ENCODE measurements at regions of chr4 and their contacts with region 1.

Region 1: DNA sequence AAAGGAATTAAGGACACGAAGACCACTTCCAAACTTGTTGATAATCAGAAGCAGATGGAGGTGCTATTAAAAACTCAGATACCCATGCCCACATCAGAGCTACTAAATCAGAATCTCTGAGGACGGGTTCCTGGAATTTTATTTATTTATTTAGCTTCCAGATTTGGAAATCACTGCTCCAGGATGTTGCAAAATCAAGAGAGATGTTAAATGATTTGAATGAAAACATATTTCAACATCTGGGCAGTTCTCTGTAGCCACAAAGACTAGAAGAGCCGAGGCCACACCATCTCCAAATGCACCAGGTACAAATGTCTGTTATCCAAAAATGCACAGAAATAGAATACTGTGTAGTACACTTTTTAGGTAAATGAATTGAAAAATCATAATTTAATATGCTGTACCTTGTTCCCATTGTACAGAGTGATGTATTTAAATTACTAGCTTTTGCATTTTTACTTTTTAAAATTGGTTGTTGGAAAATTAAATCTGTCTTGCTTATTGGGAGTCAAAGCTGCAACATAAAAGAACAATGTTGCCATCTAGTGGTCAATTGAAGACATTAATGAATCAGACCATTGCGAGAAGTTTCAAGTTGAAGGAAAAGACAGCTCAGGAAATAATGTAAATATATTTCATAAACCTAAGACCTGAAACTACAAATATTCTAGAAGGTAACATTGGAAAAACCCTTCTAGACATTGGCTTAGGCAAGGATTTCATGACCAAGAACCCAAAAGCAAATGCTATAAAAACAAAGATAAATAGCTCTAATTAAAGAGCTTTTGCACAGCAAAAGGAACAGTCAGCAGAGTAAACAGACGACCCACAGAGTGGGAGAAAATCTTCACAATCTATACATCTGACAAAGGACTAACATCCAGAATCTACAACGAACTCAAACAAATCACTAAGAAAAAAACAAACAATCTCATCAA is 151.3 kb upstream of the TTC29 start:
- DNase-seq: peak in 2 of 9 experiments; percentile 54 to 66
- ATAC-seq: no peak
- H3K4me3 ChIP-seq: no peak overlapping the region
- H3K4me3 Mint-ChIP-seq: no peak overlapping the region
- H3K27ac ChIP-seq: no peak overlapping the region
- H3K27ac Mint-ChIP-seq: no peak overlapping the region
- H3K4me1 ChIP-seq: no peaks in the 10 kb centered on the region
- H3K4me1 Mint-ChIP-seq: no peaks in the 10 kb centered on the region
- H3K27me3 ChIP-seq: no peaks in the 10 kb centered on the region
- H3K27me3 Mint-ChIP-seq: peaks cover 27% of the 10 kb centered on the region
- CTCF ChIP-seq: peak; percentile 89

Region 2: GRCh38 chr4:145234091-145234706 is 1862.7 kb before region 1 on chr4:
- CTCF ChIA-PET with region 1: no interaction called
- POLR2A ChIA-PET with region 1: no interaction called
- intact Hi-C with region 1: loop called in 1 of 2 experiments (anchors 5 kb)
- DNase-seq: peak; percentile 4 to 75 (median 48)
- ATAC-seq: peak; percentile 83
- H3K4me3 ChIP-seq: no peak overlapping the region
- H3K4me3 Mint-ChIP-seq: no peak overlapping the region
- H3K27ac ChIP-seq: no peak overlapping the region
- H3K27ac Mint-ChIP-seq: no peak overlapping the region
- H3K4me1 ChIP-seq: no peaks in the 10 kb centered on the region
- H3K4me1 Mint-ChIP-seq: no peaks in the 10 kb centered on the region
- H3K27me3 ChIP-seq: no peaks in the 10 kb centered on the region
- H3K27me3 Mint-ChIP-seq: peaks cover 2% of the 10 kb centered on the region
- CTCF ChIP-seq: peak; percentile 66

Region 3: DNA sequence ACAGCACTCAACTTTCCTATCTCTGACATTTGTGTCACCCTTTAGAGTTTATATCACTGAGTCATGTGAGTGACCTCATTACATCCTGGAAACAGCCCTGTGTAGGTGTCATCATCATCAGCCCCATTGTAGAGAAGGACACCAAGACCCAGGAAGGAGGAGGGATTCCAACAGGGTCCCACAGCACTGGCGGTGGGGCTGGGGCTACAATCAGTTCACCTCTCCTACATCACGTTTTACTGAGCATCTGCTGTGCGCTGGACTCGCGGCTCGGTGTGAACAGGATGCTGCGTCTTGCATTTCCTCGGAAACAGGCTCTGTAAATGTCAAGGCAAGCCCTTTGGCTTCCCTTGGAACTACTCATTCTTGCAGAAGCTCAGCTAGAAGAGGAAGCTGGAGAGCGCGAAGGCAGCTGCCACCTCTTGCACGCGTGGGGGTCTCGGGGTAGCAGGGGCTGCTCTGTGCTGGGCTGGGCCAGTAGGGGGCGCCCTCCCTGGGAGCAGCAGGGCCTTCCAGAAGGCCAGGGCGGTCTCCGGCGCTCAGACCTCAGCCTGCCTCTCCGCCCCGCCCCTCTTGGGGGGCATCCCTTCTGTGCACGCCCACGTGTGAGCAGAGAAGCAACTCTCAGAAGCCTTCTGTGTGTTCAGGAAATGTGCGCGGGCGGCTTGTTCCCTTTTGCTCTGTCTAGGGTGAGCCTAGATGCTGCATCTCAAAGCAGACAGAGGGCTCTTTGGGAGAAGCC is 853.6 kb before region 1 on chr4:
- CTCF ChIA-PET with region 1: interaction called, 7 read pairs
- POLR2A ChIA-PET with region 1: no interaction called
- intact Hi-C with region 1: loop called in 1 of 2 experiments (anchors 1 kb)
- DNase-seq: peak in 8 of 9 experiments; percentile 24 to 66 (median 50)
- ATAC-seq: peak; percentile 74
- H3K4me3 ChIP-seq: peak overlapping the region in 1 of 2 experiments; percentile 28
- H3K4me3 Mint-ChIP-seq: peak overlapping the region; percentile 57
- H3K27ac ChIP-seq: no peak overlapping the region
- H3K27ac Mint-ChIP-seq: no peak overlapping the region
- H3K4me1 ChIP-seq: peaks cover 6% of the 10 kb centered on the region
- H3K4me1 Mint-ChIP-seq: peaks cover 18% of the 10 kb centered on the region
- H3K27me3 ChIP-seq: no peaks in the 10 kb centered on the region
- H3K27me3 Mint-ChIP-seq: peaks cover 5% of the 10 kb centered on the region
- CTCF ChIP-seq: peak; percentile 43

Region 4: DNA sequence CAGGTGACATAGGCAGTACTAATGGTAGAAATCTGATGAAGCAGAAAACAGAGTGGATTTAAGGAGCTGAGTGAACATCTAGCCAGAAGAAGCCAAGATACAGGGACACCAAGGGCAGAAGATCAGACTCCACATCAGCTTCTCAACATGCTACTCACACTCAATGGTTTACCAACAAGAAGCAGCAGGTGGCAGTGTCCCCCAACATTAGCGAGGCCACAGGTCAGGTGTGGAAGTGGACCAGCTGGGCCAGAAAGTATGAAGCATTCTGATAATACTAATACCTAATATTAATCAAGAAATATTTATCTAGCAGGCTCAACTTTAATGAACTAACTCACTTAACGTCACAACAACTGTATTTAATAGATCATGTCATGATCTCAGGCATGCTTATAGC is 77.9 kb before region 1 on chr4:
- CTCF ChIA-PET with region 1: interaction called, 62 read pairs
- POLR2A ChIA-PET with region 1: no interaction called
- intact Hi-C with region 1: loop called (anchors 1 kb)
- DNase-seq: peak; percentile 5 to 60 (median 39)
- ATAC-seq: no peak
- H3K4me3 ChIP-seq: no peak overlapping the region
- H3K4me3 Mint-ChIP-seq: no peak overlapping the region
- H3K27ac ChIP-seq: no peak overlapping the region
- H3K27ac Mint-ChIP-seq: no peak overlapping the region
- H3K4me1 ChIP-seq: no peaks in the 10 kb centered on the region
- H3K4me1 Mint-ChIP-seq: no peaks in the 10 kb centered on the region
- H3K27me3 ChIP-seq: no peaks in the 10 kb centered on the region
- H3K27me3 Mint-ChIP-seq: peaks cover 3% of the 10 kb centered on the region
- CTCF ChIP-seq: peak; percentile 41

Region 5: DNA sequence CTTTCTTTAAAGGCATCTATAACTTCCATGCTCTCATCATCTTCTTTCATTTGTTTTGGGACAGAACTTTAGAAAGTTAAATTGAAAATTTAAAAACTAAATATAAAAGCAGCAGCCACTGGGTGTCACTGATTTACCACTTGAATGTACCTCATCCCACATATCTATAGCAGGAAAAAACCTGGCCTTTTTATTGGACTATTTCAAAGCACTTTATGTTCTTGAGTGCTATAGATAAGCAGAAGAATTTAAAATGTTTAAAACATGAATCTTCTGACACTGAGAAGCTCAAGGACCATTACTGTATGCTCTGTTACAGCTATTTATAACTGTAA is 14.1 kb after region 1 on chr4:
- CTCF ChIA-PET with region 1: interaction called, 18 read pairs
- POLR2A ChIA-PET with region 1: no interaction called
- intact Hi-C with region 1: no loop called
- DNase-seq: no peak
- ATAC-seq: no peak
- H3K4me3 ChIP-seq: no peak overlapping the region
- H3K4me3 Mint-ChIP-seq: no peak overlapping the region
- H3K27ac ChIP-seq: no peak overlapping the region
- H3K27ac Mint-ChIP-seq: no peak overlapping the region
- H3K4me1 ChIP-seq: no peaks in the 10 kb centered on the region
- H3K4me1 Mint-ChIP-seq: no peaks in the 10 kb centered on the region
- H3K27me3 ChIP-seq: no peaks in the 10 kb centered on the region
- H3K27me3 Mint-ChIP-seq: peaks cover 4% of the 10 kb centered on the region
- CTCF ChIP-seq: no peak

Measured in CD8-positive, alpha-beta T cell (primary cell).